Activated CD4-positive, alpha-beta memory T cell treated with anti-CD3 and anti-CD28 coated beads for 36 hours (primary cell): ENCODE measurements at regions of chr10 and their contacts with region 1.

Region 1: DNA sequence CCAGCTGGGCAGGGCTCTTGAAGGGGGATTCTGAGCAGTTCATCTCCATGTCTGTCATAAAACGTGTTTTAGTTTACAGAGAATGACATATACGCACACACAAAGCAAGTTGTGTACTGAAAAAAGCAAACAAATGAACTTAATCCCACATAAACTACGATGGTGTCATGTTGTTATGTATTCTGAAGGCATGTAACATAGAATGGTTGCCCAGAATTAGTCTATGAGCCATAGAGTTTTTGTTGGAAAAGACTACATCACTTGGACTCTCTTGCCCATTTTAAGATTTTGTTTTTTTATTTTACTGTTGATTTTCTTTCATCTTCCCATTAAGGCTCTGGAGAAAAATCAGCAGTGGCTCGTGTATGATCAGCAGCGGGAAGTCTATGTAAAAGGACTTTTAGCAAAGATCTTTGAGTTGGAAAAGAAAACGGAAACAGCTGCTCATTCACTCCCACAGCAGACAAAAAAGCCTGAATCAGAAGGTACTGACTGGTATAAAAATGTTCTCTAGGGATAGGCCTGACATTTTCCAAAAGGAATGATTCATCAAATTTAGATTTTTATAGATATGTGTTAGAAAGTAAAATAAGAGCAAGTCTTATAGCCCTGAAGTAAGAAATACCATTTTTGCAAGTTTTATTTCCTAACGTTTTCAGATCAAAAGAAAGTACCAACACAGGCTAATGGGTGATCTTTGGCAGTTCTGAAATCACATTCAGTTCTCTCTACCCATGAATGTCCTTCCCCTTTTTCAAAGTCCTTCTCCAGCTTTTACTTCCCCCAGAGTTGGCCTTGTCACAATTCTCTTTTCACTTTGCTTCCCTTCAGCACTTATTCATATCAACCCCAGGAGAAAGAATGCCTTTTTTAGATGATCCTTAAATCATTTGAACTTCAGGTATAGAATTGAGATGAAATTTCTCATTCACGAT is 18.9 kb downstream of the CEP55 start:
- DNase-seq: no peak
- H3K4me3 Mint-ChIP-seq: no peak overlapping the region
- H3K27ac Mint-ChIP-seq: no peak overlapping the region
- H3K4me1 Mint-ChIP-seq: peaks cover 7% of the 10 kb centered on the region
- H3K27me3 Mint-ChIP-seq: no peaks in the 10 kb centered on the region

Region 2: DNA sequence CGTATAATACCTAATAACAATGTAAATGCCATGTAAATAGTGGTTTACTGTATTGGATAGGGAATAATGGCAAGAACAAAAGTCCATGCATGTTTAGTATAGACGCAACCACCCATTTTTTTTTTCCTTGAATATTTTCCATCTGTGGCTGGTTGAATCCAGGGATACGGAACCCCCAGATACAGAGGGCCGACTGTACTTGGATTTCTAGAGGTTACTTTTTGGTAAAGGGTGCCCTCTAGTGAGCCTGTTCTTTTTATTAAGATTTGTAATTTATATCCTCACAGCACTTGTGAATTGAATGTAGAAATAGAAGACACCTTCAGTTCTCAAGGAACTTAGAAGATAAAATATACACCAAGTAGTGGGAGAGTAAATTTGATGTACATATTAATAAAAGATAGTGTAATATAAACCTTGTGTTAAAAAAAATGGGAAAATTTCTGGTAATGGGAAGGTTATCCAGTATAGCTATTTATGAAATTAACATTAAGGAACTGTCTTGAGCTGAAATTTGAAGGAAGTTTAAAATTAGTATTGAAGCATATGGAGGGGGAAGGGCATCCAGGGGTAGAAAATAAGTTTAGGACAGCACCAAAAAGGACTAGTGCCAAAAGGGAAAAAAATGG is 635.0 kb before region 1 on chr10:
- CTCF ChIA-PET with region 1: no interaction called
- POLR2A ChIA-PET with region 1: no interaction called
- intact Hi-C with region 1: no loop called
- DNase-seq: no peak
- H3K4me3 Mint-ChIP-seq: no peak overlapping the region
- H3K27ac Mint-ChIP-seq: no peak overlapping the region
- H3K4me1 Mint-ChIP-seq: peaks cover 21% of the 10 kb centered on the region
- H3K27me3 Mint-ChIP-seq: no peaks in the 10 kb centered on the region

Region 3: DNA sequence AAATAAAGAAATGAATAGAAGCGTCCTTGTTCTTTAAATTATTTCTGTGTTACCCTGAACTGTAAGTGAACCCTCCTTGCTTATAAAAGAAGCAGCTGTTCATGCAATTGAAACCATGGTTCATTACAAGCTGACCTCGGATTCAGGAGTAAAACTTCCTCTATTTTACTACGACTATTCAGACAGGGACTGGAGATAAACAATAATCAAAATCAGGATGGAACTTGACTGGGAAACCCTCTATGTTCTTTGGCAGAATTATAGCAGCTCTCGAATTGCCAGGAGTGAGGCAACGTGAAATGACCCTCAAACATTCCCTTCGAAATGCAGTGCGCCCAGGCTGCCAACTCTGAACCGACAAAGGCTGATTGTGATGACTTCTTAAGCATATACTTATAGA is 269.6 kb before region 1 on chr10:
- CTCF ChIA-PET with region 1: no interaction called
- POLR2A ChIA-PET with region 1: no interaction called
- intact Hi-C with region 1: no loop called
- DNase-seq: no peak
- H3K4me3 Mint-ChIP-seq: no peak overlapping the region
- H3K27ac Mint-ChIP-seq: no peak overlapping the region
- H3K4me1 Mint-ChIP-seq: no peaks in the 10 kb centered on the region
- H3K27me3 Mint-ChIP-seq: peaks cover 5% of the 10 kb centered on the region

Region 4: GRCh38 chr10:93446758-93447567 is 68.4 kb before region 1 on chr10:
- CTCF ChIA-PET with region 1: no interaction called
- POLR2A ChIA-PET with region 1: no interaction called
- intact Hi-C with region 1: no loop called
- DNase-seq: no peak
- H3K4me3 Mint-ChIP-seq: no peak overlapping the region
- H3K27ac Mint-ChIP-seq: no peak overlapping the region
- H3K4me1 Mint-ChIP-seq: peaks cover 7% of the 10 kb centered on the region
- H3K27me3 Mint-ChIP-seq: no peaks in the 10 kb centered on the region

Region 5: DNA sequence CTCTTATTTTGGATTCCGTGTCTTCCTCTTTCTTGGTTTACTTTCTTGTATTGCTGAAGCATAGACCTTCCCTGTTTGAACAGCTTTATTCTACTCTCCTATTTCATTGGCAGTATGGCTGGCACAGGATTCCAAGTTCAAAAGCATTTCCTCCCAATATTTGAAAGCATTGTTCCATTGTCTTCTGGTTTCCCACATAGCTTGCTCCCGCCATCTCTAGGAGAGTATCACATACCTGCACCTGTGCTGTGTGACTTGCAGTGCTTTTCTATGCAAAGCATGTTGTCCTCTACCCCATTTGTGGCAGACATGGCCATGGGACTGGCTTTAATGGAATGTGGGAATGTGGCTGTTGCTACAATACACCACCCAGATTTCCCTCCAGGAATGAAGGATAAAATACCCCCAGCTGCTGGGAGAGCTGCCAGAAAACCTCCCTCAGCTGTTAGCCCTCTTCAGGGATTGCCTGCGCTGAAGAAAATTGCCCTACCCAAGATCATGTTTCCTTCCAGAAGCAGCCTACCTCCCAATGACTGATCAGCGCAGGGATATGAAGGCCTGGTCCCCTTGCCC is 26.3 kb before region 1 on chr10:
- CTCF ChIA-PET with region 1: interaction called, 84 read pairs
- POLR2A ChIA-PET with region 1: no interaction called
- intact Hi-C with region 1: no loop called
- DNase-seq: no peak
- H3K4me3 Mint-ChIP-seq: no peak overlapping the region
- H3K27ac Mint-ChIP-seq: no peak overlapping the region
- H3K4me1 Mint-ChIP-seq: no peaks in the 10 kb centered on the region
- H3K27me3 Mint-ChIP-seq: peaks cover 12% of the 10 kb centered on the region

Region 6: GRCh38 chr10:93503075-93503474 is 12.3 kb before region 1 on chr10:
- CTCF ChIA-PET with region 1: interaction called, 17 read pairs
- POLR2A ChIA-PET with region 1: interaction called, 3 read pairs
- intact Hi-C with region 1: no loop called
- DNase-seq: no peak
- H3K4me3 Mint-ChIP-seq: peak overlapping the region; percentile 36
- H3K27ac Mint-ChIP-seq: peak overlapping the region; percentile 50
- H3K4me1 Mint-ChIP-seq: peaks cover 51% of the 10 kb centered on the region
- H3K27me3 Mint-ChIP-seq: no peaks in the 10 kb centered on the region